ENCODE measurements at regions of chr21 and their contacts with region 1.

Region 1: GRCh38 chr21:24895885-24896734 is 711.2 kb downstream of the MRPL39 start:
- DNase-seq: no peak
- ATAC-seq: peak in 1 of 8 donors; percentile 34
- H3K4me3 ChIP-seq: no peak overlapping the region
- H3K27ac ChIP-seq: no peak overlapping the region
- H3K4me1 ChIP-seq: no peaks in the 10 kb centered on the region
- H3K27me3 ChIP-seq: no peaks in the 10 kb centered on the region
- CTCF ChIP-seq: peak in 6 of 9 donors; percentile 29 to 65 (median 42)

Region 2: GRCh38 chr21:25039461-25040380 is 143.6 kb after region 1 on chr21:
- intact Hi-C with region 1: loop called in 2 of 10 experiments (anchors 10 kb)
- DNase-seq: no peak
- ATAC-seq: peak in 2 of 8 donors; percentile 29 to 33
- H3K4me3 ChIP-seq: no peak overlapping the region
- H3K27ac ChIP-seq: no peak overlapping the region
- H3K4me1 ChIP-seq: peaks cover 0 to 6% (median 0%) of the 10 kb centered on the region in 9 donors
- H3K27me3 ChIP-seq: no peaks in the 10 kb centered on the region
- CTCF ChIP-seq: peak in 7 of 9 donors; percentile 27 to 61 (median 36)

Region 3: GRCh38 chr21:25313829-25314228 is 417.7 kb after region 1 on chr21:
- intact Hi-C with region 1: loop called in 7 of 10 experiments (anchors 2 to 10 kb)
- DNase-seq: no peak
- ATAC-seq: no peak
- H3K4me3 ChIP-seq: no peak overlapping the region
- H3K27ac ChIP-seq: no peak overlapping the region
- H3K4me1 ChIP-seq: no peaks in the 10 kb centered on the region
- H3K27me3 ChIP-seq: no peaks in the 10 kb centered on the region
- CTCF ChIP-seq: peak in 8 of 9 donors; percentile 22 to 53 (median 30)

Region 4: GRCh38 chr21:25385911-25386474 is 489.9 kb after region 1 on chr21:
- intact Hi-C with region 1: loop called in 7 of 10 experiments (anchors 5 to 10 kb)
- DNase-seq: no peak
- ATAC-seq: no peak
- H3K4me3 ChIP-seq: no peak overlapping the region
- H3K27ac ChIP-seq: no peak overlapping the region
- H3K4me1 ChIP-seq: no peaks in the 10 kb centered on the region
- H3K27me3 ChIP-seq: peaks cover 0 to 9% (median 0%) of the 10 kb centered on the region in 7 donors
- CTCF ChIP-seq: peak; percentile 68 to 85 (median 82)